BJ (cell line): ENCODE measurements at regions of chr9 and their contacts with region 1.

Region 1: DNA sequence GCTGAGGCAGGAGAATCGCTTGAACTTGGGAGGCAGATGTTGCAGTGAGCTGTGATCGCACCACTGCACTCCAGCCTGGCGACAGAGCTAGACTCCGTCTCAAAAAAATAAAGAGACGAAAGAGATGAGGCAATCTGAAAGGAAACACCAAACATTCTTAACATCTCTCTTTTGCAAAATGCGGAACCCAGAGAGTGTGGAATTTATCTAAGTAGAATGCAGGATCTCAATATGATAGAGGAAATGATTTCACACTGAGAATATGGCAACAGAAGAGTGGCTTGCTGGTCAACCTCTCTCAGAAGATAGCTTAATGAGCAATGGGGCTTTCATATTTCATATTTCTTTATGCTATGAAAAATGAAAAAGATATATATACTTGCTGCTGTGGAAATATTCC is 33.4 kb upstream of the PCA3 start:
- DNase-seq: no peak
- H3K4me3 ChIP-seq: no peak overlapping the region
- H3K27me3 ChIP-seq: no peaks in the 10 kb centered on the region
- CTCF ChIP-seq: no peak

Region 2: DNA sequence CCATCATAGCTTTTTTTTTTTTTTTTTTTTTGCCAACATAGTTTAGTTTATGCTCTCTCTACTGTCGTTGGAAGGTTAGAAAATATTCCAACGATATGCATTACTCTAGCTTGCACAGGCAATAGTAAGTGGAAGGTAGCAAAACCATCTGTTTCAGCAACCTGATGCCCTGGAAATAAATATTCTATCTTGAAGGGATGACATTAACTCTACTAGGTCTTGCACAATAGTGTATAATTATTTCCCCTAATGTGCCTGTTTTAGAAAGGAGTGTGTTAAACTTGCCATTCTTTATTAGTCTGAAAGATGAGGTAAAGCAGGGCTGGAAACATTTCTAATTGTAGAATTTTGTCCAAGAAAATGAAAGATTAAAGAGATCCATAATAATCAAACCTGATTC is 729.3 kb before region 1 on chr9:
- CTCF ChIA-PET with region 1: no interaction called
- POLR2A ChIA-PET with region 1: interaction called, 24 read pairs
- DNase-seq: no peak
- H3K4me3 ChIP-seq: no peak overlapping the region
- H3K27me3 ChIP-seq: no peaks in the 10 kb centered on the region
- CTCF ChIP-seq: no peak

Region 3: DNA sequence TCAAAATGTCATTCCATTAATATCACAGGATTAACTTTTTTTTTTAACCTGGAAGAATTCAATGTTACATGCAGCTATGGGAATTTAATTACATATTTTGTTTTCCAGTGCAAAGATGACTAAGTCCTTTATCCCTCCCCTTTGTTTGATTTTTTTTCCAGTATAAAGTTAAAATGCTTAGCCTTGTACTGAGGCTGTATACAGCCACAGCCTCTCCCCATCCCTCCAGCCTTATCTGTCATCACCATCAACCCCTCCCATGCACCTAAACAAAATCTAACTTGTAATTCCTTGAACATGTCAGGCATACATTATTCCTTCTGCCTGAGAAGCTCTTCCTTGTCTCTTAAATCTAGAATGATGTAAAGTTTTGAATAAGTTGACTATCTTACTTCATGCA is 54.1 kb after region 1 on chr9:
- CTCF ChIA-PET with region 1: no interaction called
- POLR2A ChIA-PET with region 1: no interaction called
- DNase-seq: no peak
- H3K4me3 ChIP-seq: no peak overlapping the region
- H3K27me3 ChIP-seq: no peaks in the 10 kb centered on the region
- CTCF ChIP-seq: no peak